ENCODE measurements at regions of chr19 and their contacts with region 1.

Region 1: DNA sequence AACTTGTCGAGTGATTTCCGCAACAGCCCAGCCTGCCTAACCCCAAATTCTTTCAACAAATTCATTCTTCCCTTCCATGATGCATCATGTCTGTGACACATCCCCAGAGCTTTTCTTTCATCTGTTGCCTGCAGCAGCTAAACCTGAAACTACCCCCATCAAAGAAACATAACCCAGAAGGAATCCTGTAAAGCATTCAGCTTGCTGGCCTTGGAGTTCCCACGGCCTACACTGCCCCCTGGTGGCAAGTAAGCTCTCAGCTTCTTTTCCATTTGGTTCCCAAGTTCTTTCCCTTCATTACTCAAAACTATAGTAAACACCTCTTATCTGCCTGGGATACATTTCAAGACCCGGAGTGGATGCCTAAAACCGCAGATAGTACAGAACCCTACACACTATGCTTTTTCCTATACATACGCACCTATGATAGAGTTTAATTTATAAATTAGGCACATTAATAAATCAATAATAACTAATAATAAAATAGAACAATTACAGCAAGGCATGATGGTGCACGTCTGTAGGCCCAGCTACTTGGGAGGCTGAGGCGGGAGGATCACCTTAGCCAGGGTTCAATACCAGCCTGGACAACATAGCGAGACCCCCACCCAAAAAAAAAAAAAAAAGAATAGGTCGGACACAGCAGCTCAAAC is 7.4 kb downstream of the ETHE1 start:
- DNase-seq: peak; percentile 93
- H3K4me3 Mint-ChIP-seq: no peak overlapping the region
- H3K27ac Mint-ChIP-seq: peak overlapping the region; percentile 57
- H3K4me1 Mint-ChIP-seq: peaks cover 16% of the 10 kb centered on the region
- H3K27me3 Mint-ChIP-seq: no peaks in the 10 kb centered on the region

Region 2: DNA sequence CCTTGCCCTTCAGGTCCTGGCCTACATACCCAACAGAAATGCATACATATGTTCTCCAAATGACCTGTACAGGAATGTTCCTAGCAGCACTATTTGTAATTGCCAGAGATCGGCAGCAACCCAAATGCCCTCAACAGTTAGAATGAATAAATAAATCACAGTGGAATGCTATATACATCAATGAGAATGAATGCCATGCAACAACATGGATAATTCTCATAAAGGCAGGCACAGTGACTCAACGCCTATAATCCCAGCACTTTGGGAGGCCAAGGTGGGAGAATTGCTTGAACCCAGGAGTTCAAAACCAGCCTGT is 86.2 kb before region 1 on chr19:
- intact Hi-C with region 1: loop called (anchors 1 kb)
- DNase-seq: no peak
- H3K4me3 Mint-ChIP-seq: no peak overlapping the region
- H3K27ac Mint-ChIP-seq: no peak overlapping the region
- H3K4me1 Mint-ChIP-seq: peaks cover 30% of the 10 kb centered on the region
- H3K27me3 Mint-ChIP-seq: peaks cover 2% of the 10 kb centered on the region

Region 3: DNA sequence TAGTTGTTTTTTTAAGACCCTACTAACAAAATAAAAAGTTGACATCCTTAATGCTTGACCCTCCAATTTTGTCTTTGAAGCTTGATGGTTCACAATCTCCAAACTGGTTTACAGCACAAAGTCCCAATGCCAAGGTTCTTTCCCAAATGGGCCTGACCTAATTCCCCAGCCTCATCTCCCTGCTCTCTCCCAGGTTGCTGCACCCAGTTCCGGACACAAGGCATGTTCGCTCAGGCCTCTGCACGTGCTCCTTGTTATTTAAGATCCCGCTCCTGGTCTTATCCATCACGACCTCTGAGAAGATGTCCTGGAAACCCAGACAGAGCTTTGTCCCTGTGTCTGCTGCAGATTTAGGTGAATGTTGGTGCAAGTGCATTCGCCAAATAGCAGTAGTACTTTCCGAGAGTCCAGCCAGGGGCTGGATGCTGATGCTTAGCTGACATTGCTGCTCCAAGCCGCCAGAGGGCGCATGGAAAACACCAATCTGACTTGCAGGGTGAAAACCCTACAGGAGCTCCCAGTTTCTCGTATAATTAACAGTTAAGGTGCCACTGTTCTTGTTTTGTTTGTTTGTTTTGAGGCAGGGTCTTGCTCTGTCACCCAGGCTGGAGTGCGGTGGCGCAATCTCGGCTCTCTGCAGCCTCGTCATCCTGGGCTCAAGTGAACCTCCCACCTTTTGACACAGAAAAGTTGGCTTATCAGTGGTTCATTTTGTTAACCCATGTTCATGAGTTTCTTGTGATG is 72.6 kb before region 1 on chr19:
- intact Hi-C with region 1: loop called (anchors 1 kb)
- DNase-seq: peak; percentile 93
- H3K4me3 Mint-ChIP-seq: no peak overlapping the region
- H3K27ac Mint-ChIP-seq: peak overlapping the region; percentile 44
- H3K4me1 Mint-ChIP-seq: peaks cover 25% of the 10 kb centered on the region
- H3K27me3 Mint-ChIP-seq: no peaks in the 10 kb centered on the region

Measured in activated CD4-positive, alpha-beta T cell treated with anti-CD3 and anti-CD28 coated beads, Interleukin-2, amount 10 ng/mL, durations not matched to agents 24 days and 14 days (primary cell).